ENCODE measurements at regions of chr19 and their contacts with region 1.

Region 1: DNA sequence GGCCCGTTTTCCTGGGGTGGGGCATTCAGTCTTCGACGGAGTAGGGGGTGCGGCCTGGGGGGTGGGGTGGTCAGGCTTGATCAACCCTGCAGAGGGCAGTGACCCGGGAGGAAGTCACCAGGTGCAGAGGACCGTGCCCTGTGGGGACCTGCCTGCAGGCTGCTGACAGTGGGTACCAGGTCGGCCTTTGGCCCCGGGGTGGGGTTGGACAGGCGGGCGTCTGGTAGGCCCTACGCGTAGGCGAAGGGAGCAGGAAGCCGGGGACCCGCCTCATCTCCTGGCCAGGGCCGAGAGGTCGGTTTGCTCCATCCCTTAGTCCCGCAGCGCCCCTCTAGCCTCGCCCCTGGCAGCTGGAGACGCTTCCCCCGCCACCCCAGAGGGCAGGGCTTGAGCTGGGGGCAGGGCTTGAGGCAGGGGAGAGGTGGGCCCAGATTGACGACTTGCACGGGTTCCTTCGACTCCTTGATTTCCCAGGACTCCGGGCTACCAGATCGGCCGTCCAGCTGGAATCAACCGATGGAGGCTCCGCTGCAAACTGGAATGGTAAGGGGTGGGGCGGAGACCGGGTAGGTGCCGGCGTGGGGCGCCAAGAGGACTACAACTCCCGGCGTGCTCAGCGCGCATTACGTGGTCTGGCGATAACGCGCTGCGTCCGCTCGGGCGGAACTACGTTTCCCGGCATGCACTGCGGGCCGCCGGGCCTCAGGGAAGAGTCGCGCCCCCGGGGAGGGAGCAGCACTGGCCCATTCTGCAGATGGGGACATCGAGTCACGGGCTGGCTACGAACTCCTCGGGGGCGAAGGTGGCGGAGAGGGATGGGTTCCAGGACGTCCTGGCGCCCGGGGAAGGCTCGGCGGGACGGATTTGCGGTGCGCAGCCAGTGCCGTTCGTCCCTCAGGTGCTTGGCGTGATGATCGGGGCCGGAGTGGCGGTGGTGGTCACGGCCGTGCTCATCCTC is at the start of gene PNPLA6:
- DNase-seq: peak; percentile 84 to 96 (median 91)
- ATAC-seq: peak; percentile 77
- H3K4me3 ChIP-seq: peak within 1 kb of the TSS; percentile 96 to 100
- H3K4me3 Mint-ChIP-seq: peak within 1 kb of the TSS; percentile 96
- H3K27ac ChIP-seq: peak within 1 kb of the TSS; percentile 63 to 72
- H3K27ac Mint-ChIP-seq: peak within 1 kb of the TSS; percentile 88
- H3K4me1 ChIP-seq: peaks cover 10% of the 10 kb centered on the region
- H3K4me1 Mint-ChIP-seq: peaks cover 22% of the 10 kb centered on the region
- H3K27me3 ChIP-seq: no peaks in the 10 kb centered on the region
- H3K27me3 Mint-ChIP-seq: no peaks in the 10 kb centered on the region
- CTCF ChIP-seq: no peak
- total RNA-seq, gene PNPLA6: 76.5 to 81.3 TPM

Region 2: DNA sequence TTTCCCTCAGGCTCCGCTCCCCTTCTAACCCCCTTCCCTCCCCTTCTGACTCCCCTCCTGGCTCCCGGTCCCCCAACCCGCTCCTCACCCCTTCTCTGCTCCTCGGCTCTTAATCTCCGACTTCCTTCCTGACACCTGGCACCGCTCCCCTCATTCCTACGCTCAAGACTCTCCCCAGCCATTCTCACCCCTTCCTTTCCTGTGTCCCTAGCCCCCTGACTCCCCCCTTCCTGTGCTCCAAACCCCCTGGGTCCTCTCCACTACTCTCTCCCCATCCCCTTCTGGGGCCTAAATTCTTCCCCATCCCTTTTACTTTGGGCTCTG is 1173.3 kb before region 1 on chr19:
- CTCF ChIA-PET with region 1: no interaction called
- POLR2A ChIA-PET with region 1: no interaction called
- intact Hi-C with region 1: loop called in 1 of 2 experiments (anchors 5 kb)
- DNase-seq: no peak
- ATAC-seq: peak; percentile 1
- H3K4me3 ChIP-seq: peak overlapping the region; percentile 78 to 79
- H3K4me3 Mint-ChIP-seq: peak overlapping the region; percentile 93
- H3K27ac ChIP-seq: peak overlapping the region; percentile 72 to 85
- H3K27ac Mint-ChIP-seq: peak overlapping the region; percentile 94
- H3K4me1 ChIP-seq: peaks cover 21% of the 10 kb centered on the region
- H3K4me1 Mint-ChIP-seq: peaks cover 25% of the 10 kb centered on the region
- H3K27me3 ChIP-seq: no peaks in the 10 kb centered on the region
- H3K27me3 Mint-ChIP-seq: no peaks in the 10 kb centered on the region
- CTCF ChIP-seq: no peak

Region 3: GRCh38 chr19:7326105-7326877 is 209.0 kb before region 1 on chr19:
- CTCF ChIA-PET with region 1: no interaction called
- POLR2A ChIA-PET with region 1: no interaction called
- intact Hi-C with region 1: no loop called
- DNase-seq: peak in 4 of 9 experiments; percentile 23 to 66 (median 50)
- ATAC-seq: no peak
- H3K4me3 ChIP-seq: no peak overlapping the region
- H3K4me3 Mint-ChIP-seq: no peak overlapping the region
- H3K27ac ChIP-seq: no peak overlapping the region
- H3K27ac Mint-ChIP-seq: no peak overlapping the region
- H3K4me1 ChIP-seq: no peaks in the 10 kb centered on the region
- H3K4me1 Mint-ChIP-seq: no peaks in the 10 kb centered on the region
- H3K27me3 ChIP-seq: no peaks in the 10 kb centered on the region
- H3K27me3 Mint-ChIP-seq: no peaks in the 10 kb centered on the region
- CTCF ChIP-seq: peak; percentile 38

Region 4: DNA sequence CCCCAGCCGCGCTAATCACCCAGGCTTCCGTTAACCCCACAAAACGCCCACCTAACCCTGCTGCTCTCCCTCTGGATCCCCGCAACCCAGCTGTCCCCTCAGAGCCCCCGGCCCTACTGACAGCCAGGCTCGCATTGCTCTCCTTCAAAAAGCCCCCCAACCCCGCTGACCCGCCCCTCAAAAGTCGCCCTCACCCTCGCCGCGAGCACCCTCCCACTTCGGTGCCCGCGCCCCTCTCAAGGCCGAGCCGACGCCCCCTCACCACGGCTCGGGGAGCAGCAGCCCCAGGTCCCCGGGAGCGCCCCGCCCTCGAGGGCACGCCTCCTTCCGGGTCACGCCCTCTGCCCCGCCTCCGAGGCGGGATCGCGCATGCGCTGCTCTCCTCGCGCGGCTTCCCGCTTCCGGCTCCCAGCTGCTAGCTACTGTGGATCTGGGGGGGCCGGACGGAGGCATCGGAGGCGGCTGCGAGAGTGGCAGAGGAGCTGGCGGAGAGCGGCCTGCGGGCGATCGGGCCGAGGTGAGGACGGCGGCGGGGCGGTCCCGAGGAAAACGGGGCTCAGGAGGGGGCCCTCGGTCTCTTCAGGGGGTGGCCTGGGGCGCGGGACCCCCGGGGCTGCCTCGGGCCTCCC is 140.5 kb before region 1 on chr19:
- CTCF ChIA-PET with region 1: no interaction called
- POLR2A ChIA-PET with region 1: interaction called, 3 read pairs
- intact Hi-C with region 1: loop called (anchors 1 kb)
- DNase-seq: peak; percentile 79 to 97 (median 89)
- ATAC-seq: peak; percentile 90
- H3K4me3 ChIP-seq: peak overlapping the region; percentile 39 to 65
- H3K4me3 Mint-ChIP-seq: peak overlapping the region; percentile 86
- H3K27ac ChIP-seq: peak overlapping the region; percentile 12 to 72
- H3K27ac Mint-ChIP-seq: peak overlapping the region; percentile 87
- H3K4me1 ChIP-seq: peaks cover 26% of the 10 kb centered on the region
- H3K4me1 Mint-ChIP-seq: peaks cover 41% of the 10 kb centered on the region
- H3K27me3 ChIP-seq: no peaks in the 10 kb centered on the region
- H3K27me3 Mint-ChIP-seq: no peaks in the 10 kb centered on the region
- CTCF ChIP-seq: no peak

Region 5: DNA sequence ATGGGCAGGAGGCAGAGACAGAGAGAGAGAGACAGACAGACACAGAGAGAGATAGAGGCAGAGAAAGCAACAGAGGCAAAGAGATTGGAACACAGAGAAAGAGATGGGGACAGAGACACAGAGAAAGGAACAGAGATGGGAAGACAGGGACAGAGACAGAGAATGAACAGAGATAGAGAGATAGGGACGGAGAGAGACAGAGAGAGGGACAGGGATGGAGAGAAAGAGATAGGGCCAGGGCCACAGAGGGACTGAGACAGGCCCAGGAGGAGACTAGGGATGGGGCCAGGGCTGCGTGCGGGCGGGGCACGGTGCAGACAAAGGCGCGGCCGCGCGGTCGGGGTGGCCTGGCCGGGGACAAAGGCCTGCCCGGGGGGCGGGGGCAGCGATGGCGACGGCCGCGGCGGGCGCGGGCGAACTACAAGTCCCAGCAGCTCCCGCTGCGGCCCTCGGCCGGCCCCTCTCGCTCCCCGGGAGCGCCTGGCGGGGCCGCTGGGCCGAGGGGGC is 19.6 kb before region 1 on chr19 and contains the start of gene ZNF358:
- CTCF ChIA-PET with region 1: interaction called, 5 read pairs
- POLR2A ChIA-PET with region 1: interaction called, 48 read pairs
- intact Hi-C with region 1: loop called in 1 of 2 experiments (anchors 2 kb)
- DNase-seq: peak in 7 of 9 experiments; percentile 17 to 65 (median 33)
- ATAC-seq: peak; percentile 87
- H3K4me3 ChIP-seq: peak within 1 kb of the TSS; percentile 39 to 58
- H3K4me3 Mint-ChIP-seq: peak within 1 kb of the TSS; percentile 82
- H3K27ac ChIP-seq: no peak within 1 kb of the TSS
- H3K27ac Mint-ChIP-seq: peak within 1 kb of the TSS; percentile 52
- H3K4me1 ChIP-seq: peaks cover 13% of the 10 kb centered on the region
- H3K4me1 Mint-ChIP-seq: peaks cover 15% of the 10 kb centered on the region
- H3K27me3 ChIP-seq: no peaks in the 10 kb centered on the region
- H3K27me3 Mint-ChIP-seq: peaks cover 4% of the 10 kb centered on the region
- CTCF ChIP-seq: no peak
- total RNA-seq, gene ZNF358: 7.1 to 9.0 TPM

Region 6: DNA sequence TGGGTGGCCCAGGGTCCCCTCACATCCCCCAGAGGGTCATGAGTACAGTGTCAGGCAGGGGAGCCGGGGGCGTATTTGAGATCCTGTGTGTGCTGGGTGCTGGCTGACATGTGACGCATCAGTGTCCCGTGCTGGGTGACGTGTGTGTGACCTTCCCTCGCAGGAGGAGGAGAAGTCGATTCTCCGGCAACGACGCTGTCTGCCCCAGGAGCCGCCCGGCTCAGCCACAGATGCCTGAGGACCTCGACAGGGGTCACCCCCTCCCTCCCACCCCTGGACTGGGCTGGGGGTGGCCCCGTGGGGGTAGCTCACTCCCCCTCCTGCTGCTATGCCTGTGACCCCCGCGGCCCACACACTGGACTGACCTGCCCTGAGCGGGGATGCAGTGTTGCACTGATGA is 26.0 kb after region 1 on chr19:
- CTCF ChIA-PET with region 1: no interaction called
- POLR2A ChIA-PET with region 1: no interaction called
- intact Hi-C with region 1: no loop called
- DNase-seq: no peak
- ATAC-seq: no peak
- H3K4me3 ChIP-seq: no peak overlapping the region
- H3K4me3 Mint-ChIP-seq: no peak overlapping the region
- H3K27ac ChIP-seq: no peak overlapping the region
- H3K27ac Mint-ChIP-seq: no peak overlapping the region
- H3K4me1 ChIP-seq: no peaks in the 10 kb centered on the region
- H3K4me1 Mint-ChIP-seq: no peaks in the 10 kb centered on the region
- H3K27me3 ChIP-seq: no peaks in the 10 kb centered on the region
- H3K27me3 Mint-ChIP-seq: no peaks in the 10 kb centered on the region
- CTCF ChIP-seq: no peak

Region 7: DNA sequence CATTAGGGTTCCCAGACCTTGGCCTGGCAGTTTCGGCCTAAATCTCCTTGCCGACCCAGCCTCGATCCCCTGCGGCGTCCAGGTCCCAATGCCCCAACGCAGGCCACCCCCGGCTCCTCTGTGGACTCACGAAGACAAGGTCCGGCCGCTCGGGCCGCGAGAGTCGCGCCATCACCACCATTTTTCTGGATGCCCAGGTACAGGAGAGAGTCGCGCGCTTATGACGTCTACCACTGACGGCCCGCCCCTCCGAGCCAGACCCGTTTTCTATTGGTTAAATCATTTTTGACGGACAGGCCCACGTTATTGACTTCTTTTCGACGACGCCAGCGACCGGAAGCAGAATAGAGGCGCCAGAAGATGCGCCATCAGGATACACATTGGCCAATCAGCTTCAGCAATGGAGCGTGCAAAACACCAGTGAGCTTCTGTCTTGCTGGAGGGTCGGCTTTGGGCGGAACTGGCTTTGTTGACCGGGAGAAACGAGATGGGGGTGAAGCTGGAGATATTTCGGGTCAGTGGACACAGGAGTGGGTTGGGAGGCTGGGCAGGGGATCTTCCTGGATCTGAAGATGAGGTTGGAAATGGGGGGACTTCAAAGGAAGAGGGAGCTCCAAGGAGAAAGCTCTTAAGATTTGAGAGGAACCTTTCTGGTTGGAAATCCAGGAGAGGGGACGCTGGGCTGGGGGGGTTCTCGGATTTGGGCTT is 94.2 kb after region 1 on chr19 and contains the starts of genes PET100 and XAB2:
- CTCF ChIA-PET with region 1: no interaction called
- POLR2A ChIA-PET with region 1: no interaction called
- intact Hi-C with region 1: loop called (anchors 1 to 2 kb)
- DNase-seq: peak; percentile 90 to 99 (median 94)
- ATAC-seq: peak; percentile 94
- H3K4me3 ChIP-seq: peak within 1 kb of the TSS; percentile 98 to 100
- H3K4me3 Mint-ChIP-seq: peak within 1 kb of the TSS; percentile 97
- H3K27ac ChIP-seq: peak within 1 kb of the TSS; percentile 92 to 99
- H3K27ac Mint-ChIP-seq: peak within 1 kb of the TSS; percentile 99
- H3K4me1 ChIP-seq: peaks cover 27% of the 10 kb centered on the region
- H3K4me1 Mint-ChIP-seq: peaks cover 36% of the 10 kb centered on the region
- H3K27me3 ChIP-seq: no peaks in the 10 kb centered on the region
- H3K27me3 Mint-ChIP-seq: no peaks in the 10 kb centered on the region
- CTCF ChIP-seq: no peak
- total RNA-seq, gene PET100: 186 to 188 TPM
- total RNA-seq, gene XAB2: 127 to 133 TPM

Region 8: DNA sequence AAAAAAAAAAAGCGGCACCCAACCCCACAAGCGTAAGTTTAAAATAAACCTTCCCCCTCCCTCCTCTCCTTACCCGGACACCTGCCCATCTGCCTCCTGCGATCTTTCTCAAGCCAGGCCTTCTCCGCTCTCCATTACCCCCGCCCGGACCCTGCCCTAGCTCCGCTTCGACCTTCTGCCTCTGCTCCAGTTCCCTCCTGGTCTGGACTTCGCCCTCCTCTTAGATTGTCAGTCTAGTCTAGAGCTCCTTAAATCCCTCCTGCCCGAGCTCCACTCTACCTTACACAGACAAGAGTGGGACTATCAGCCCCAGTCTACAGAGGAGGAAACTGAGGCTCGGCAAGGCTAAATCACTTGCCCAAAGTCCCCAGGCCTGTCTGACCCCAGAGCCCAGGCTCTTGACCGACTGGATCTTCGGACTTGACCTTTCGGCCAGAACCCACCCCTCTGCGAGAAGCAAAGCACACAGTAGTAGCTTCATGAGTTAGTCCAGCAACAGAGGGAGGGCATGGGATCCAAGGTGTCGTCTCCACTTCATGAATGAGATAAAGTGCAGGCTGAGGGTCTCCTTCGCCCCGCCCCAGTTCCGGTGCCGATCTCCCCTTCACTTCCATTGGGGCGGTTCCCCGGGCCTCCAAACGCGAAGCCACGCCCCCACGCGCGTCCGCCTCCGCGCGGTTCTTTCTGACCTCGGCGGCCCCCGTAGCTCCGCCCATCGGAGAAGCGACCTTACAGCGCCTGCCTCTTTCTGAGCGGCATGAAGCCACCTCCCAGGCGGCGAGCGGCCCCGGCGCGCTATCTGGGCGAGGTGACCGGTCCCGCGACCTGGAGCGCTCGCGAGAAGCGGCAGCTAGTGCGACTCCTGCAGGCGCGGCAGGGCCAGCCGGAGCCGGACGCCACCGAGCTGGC is 384.6 kb after region 1 on chr19 and contains the start of gene SNAPC2:
- CTCF ChIA-PET with region 1: no interaction called
- POLR2A ChIA-PET with region 1: no interaction called
- intact Hi-C with region 1: loop called in 1 of 2 experiments (anchors 10 kb)
- DNase-seq: peak; percentile 93 to 98 (median 96)
- ATAC-seq: peak; percentile 63
- H3K4me3 ChIP-seq: peak within 1 kb of the TSS; percentile 51 to 87
- H3K4me3 Mint-ChIP-seq: peak within 1 kb of the TSS; percentile 88
- H3K27ac ChIP-seq: peak within 1 kb of the TSS; percentile 55 to 65
- H3K27ac Mint-ChIP-seq: peak within 1 kb of the TSS; percentile 90
- H3K4me1 ChIP-seq: peaks cover 42% of the 10 kb centered on the region
- H3K4me1 Mint-ChIP-seq: peaks cover 48% of the 10 kb centered on the region
- H3K27me3 ChIP-seq: peaks cover 21 to 27% of the 10 kb centered on the region in 2 experiments
- H3K27me3 Mint-ChIP-seq: peaks cover 25% of the 10 kb centered on the region
- CTCF ChIP-seq: no peak
- total RNA-seq, gene SNAPC2: 15.4 to 17.0 TPM